ENCODE measurements at regions of chr21 and their contacts with region 1.

Region 1: GRCh38 chr21:34073032-34073869 is at the starts of genes MRPS6 and SLC5A3:
- DNase-seq: no peak
- ATAC-seq: peak; percentile 75
- H3K4me3 ChIP-seq: peak within 1 kb of the TSS; percentile 91
- H3K27ac ChIP-seq: peak within 1 kb of the TSS; percentile 72
- H3K4me1 ChIP-seq: peaks cover 11% of the 10 kb centered on the region
- H3K27me3 ChIP-seq: no peaks in the 10 kb centered on the region
- CTCF ChIP-seq: no peak; a peak in 1 of 6 replicates
- EP300 ChIP-seq: no peak; a peak in 1 of 4 replicates
- POLR2A ChIP-seq: peak; percentile 98
- RAD21 ChIP-seq: no peak
- polyA plus RNA-seq, gene MRPS6: 55.6 to 95.2 TPM
- polyA plus RNA-seq, gene SLC5A3: 3.3 to 4.7 TPM

Region 2: GRCh38 chr21:33968080-33968994 is 104.9 kb before region 1 on chr21:
- CTCF ChIA-PET with region 1: interaction called, 3 read pairs
- POLR2A ChIA-PET with region 1: interaction called, 3 read pairs
- RAD21 ChIA-PET with region 1: no interaction called
- SMC1A ChIA-PET with region 1: interaction called, 21 read pairs
- in situ Hi-C with region 1: no loop called
- intact Hi-C with region 1: no loop called
- DNase-seq: no peak
- ATAC-seq: peak; percentile 96
- H3K4me3 ChIP-seq: no peak overlapping the region
- H3K27ac ChIP-seq: no peak overlapping the region
- H3K4me1 ChIP-seq: no peaks in the 10 kb centered on the region
- H3K27me3 ChIP-seq: no peaks in the 10 kb centered on the region
- CTCF ChIP-seq: no peak
- EP300 ChIP-seq: no peak
- POLR2A ChIP-seq: no peak
- RAD21 ChIP-seq: no peak

Region 3: GRCh38 chr21:34157521-34157920 is 84.3 kb after region 1 on chr21:
- CTCF ChIA-PET with region 1: no interaction called
- POLR2A ChIA-PET with region 1: no interaction called
- RAD21 ChIA-PET with region 1: no interaction called
- SMC1A ChIA-PET with region 1: no interaction called
- in situ Hi-C with region 1: no loop called
- intact Hi-C with region 1: no loop called
- DNase-seq: no peak
- ATAC-seq: no peak
- H3K4me3 ChIP-seq: no peak overlapping the region
- H3K27ac ChIP-seq: no peak overlapping the region
- H3K4me1 ChIP-seq: no peaks in the 10 kb centered on the region
- H3K27me3 ChIP-seq: no peaks in the 10 kb centered on the region
- CTCF ChIP-seq: no peak
- EP300 ChIP-seq: no peak
- POLR2A ChIP-seq: no peak
- RAD21 ChIP-seq: no peak

Region 4: DNA sequence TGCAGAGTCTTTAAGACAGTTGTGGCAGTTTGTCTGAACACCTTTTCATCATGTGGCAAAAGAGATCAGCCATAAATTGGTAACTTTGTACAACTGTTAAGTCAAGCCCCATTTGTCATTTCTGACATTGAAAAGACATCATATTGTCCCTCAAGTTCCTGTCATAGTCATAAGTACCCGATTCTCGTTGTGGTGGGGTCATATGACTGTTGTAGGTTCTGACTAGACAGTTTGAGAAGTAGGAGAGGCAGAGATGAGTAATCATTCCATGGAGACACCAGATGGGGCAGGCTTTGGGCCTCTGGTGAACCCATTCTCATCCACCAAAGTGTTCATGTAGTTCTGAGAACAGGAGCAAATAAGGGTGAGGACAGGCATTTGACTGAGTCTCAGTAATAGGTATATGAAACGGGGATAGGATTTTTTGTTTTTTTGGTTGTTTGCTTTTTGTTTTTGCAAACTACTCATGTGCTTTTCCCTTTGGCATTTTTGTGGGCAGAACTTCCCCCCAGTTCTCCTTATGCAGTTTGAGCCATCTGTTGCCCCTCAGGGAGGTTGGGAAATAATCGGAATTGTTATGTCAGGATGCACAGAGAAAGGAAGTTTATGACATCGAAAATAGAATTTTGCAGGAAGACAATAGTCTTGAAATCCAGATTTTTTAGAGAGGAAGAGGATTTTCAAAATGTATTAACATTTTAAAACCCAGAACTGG is 203.6 kb after region 1 on chr21:
- CTCF ChIA-PET with region 1: no interaction called
- POLR2A ChIA-PET with region 1: no interaction called
- RAD21 ChIA-PET with region 1: no interaction called
- SMC1A ChIA-PET with region 1: no interaction called
- in situ Hi-C with region 1: no loop called
- intact Hi-C with region 1: no loop called
- DNase-seq: peak; percentile 21
- ATAC-seq: peak; percentile 81
- H3K4me3 ChIP-seq: no peak overlapping the region
- H3K27ac ChIP-seq: no peak overlapping the region
- H3K4me1 ChIP-seq: no peaks in the 10 kb centered on the region
- H3K27me3 ChIP-seq: no peaks in the 10 kb centered on the region
- CTCF ChIP-seq: no peak
- EP300 ChIP-seq: peak in 1 of 2 experiments; percentile 33; a peak in 2 of 4 replicates
- POLR2A ChIP-seq: no peak
- RAD21 ChIP-seq: no peak

Measured in GM12878 (cell line).